ENCODE measurements at regions of chr1 and their contacts with region 1.

Region 1: DNA sequence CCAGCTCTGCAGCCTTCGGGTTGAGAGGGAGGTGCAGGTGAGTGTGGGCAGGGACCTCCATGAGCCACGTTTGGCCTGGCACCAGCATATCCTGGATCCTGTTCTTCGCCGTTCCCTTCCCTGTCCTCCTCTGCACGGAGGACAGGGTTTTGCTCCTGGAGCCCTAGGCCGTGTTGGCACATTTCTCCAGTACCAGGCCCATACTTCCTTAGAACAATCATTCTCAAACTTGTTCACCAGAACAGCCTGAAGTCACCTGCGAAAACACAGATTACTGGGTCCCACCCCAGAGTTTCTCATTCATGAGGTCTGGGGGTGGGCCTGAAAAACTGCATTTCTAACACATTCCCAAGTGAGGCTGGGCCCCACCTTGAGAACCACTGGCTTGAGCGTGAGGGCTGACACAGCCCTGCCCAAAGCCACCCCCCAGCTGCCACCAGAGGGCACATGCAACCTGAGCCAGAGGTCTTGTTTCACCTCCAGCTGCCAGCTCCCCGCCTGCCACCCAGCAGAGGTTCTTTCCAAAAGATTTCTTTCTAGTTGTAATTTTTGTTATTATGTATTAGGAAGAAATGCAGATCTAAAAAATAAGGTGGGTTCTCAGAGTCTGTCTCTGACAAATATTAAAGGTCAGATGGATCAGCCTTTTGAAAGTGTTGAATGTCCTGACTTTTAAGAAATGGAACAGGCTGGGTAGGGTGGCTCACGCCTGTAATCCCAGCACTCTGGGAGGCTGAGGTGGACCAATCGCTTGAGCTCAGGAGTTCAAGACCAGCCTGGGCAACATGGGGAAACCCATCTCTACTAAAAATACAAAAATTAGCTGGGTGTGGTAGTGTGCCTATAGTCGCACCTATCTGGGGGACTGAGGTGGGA is 39.6 kb upstream of the LDLRAP1 start:
- DNase-seq: peak; percentile 55 to 87 (median 76)
- ATAC-seq: peak; percentile 95
- H3K4me3 ChIP-seq: no peak overlapping the region
- H3K4me3 Mint-ChIP-seq: no peak overlapping the region
- H3K27ac ChIP-seq: no peak overlapping the region
- H3K27ac Mint-ChIP-seq: peak overlapping the region; percentile 32
- H3K4me1 ChIP-seq: peaks cover 24% of the 10 kb centered on the region
- H3K4me1 Mint-ChIP-seq: peaks cover 26% of the 10 kb centered on the region
- H3K27me3 ChIP-seq: no peaks in the 10 kb centered on the region
- H3K27me3 Mint-ChIP-seq: no peaks in the 10 kb centered on the region
- CTCF ChIP-seq: peak; percentile 69

Region 2: GRCh38 chr1:24735509-24736375 is 768.0 kb before region 1 on chr1:
- CTCF ChIA-PET with region 1: no interaction called
- POLR2A ChIA-PET with region 1: no interaction called
- intact Hi-C with region 1: no loop called
- DNase-seq: no peak
- ATAC-seq: no peak
- H3K4me3 ChIP-seq: no peak overlapping the region
- H3K4me3 Mint-ChIP-seq: no peak overlapping the region
- H3K27ac ChIP-seq: no peak overlapping the region
- H3K27ac Mint-ChIP-seq: no peak overlapping the region
- H3K4me1 ChIP-seq: no peaks in the 10 kb centered on the region
- H3K4me1 Mint-ChIP-seq: peaks cover 2% of the 10 kb centered on the region
- H3K27me3 ChIP-seq: no peaks in the 10 kb centered on the region
- H3K27me3 Mint-ChIP-seq: peaks cover 4% of the 10 kb centered on the region
- CTCF ChIP-seq: no peak

Region 3: DNA sequence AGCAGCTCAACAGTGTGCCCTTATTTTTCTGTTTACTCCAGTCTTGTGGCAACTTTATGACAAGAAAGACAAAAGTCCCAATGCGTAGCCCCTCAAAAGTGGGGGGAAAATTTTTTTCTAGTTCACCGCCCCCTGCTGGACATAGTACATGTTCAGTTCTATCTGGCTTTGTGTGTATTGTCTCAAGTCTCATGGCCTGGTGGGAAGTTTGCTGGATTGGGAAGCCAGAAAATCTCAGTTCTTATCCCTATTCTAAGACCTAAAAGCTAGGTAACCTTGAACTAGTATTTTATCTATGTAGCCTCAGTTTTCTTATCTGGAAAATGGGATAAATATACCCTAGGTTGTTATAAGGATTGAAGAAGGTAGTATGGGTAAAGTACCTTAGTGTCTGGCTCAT is 16.2 kb before region 1 on chr1:
- CTCF ChIA-PET with region 1: interaction called, 18 read pairs
- POLR2A ChIA-PET with region 1: no interaction called
- intact Hi-C with region 1: no loop called
- DNase-seq: peak in 7 of 9 experiments; percentile 16 to 61 (median 55)
- ATAC-seq: peak; percentile 54
- H3K4me3 ChIP-seq: no peak overlapping the region
- H3K4me3 Mint-ChIP-seq: no peak overlapping the region
- H3K27ac ChIP-seq: no peak overlapping the region
- H3K27ac Mint-ChIP-seq: no peak overlapping the region
- H3K4me1 ChIP-seq: no peaks in the 10 kb centered on the region
- H3K4me1 Mint-ChIP-seq: peaks cover 12% of the 10 kb centered on the region
- H3K27me3 ChIP-seq: no peaks in the 10 kb centered on the region
- H3K27me3 Mint-ChIP-seq: no peaks in the 10 kb centered on the region
- CTCF ChIP-seq: peak; percentile 74

Region 4: GRCh38 chr1:25549273-25550154 is 45.7 kb after region 1 on chr1:
- CTCF ChIA-PET with region 1: interaction called, 13 read pairs
- POLR2A ChIA-PET with region 1: no interaction called
- intact Hi-C with region 1: no loop called
- DNase-seq: peak; percentile 32 to 86 (median 80)
- ATAC-seq: peak; percentile 93
- H3K4me3 ChIP-seq: peak overlapping the region; percentile 19 to 36
- H3K4me3 Mint-ChIP-seq: peak overlapping the region; percentile 77
- H3K27ac ChIP-seq: peak overlapping the region; percentile 57 to 65
- H3K27ac Mint-ChIP-seq: peak overlapping the region; percentile 96
- H3K4me1 ChIP-seq: peaks cover 96% of the 10 kb centered on the region
- H3K4me1 Mint-ChIP-seq: peaks cover 96% of the 10 kb centered on the region
- H3K27me3 ChIP-seq: no peaks in the 10 kb centered on the region
- H3K27me3 Mint-ChIP-seq: no peaks in the 10 kb centered on the region
- CTCF ChIP-seq: no peak

Region 5: GRCh38 chr1:25572708-25573600 is 69.2 kb after region 1 on chr1:
- CTCF ChIA-PET with region 1: interaction called, 62 read pairs
- POLR2A ChIA-PET with region 1: interaction called, 9 read pairs
- intact Hi-C with region 1: no loop called
- DNase-seq: peak in 7 of 9 experiments; percentile 25 to 70 (median 60)
- ATAC-seq: peak; percentile 78
- H3K4me3 ChIP-seq: no peak overlapping the region
- H3K4me3 Mint-ChIP-seq: no peak overlapping the region
- H3K27ac ChIP-seq: no peak overlapping the region
- H3K27ac Mint-ChIP-seq: peak overlapping the region; percentile 66
- H3K4me1 ChIP-seq: peaks cover 57% of the 10 kb centered on the region
- H3K4me1 Mint-ChIP-seq: peaks cover 62% of the 10 kb centered on the region
- H3K27me3 ChIP-seq: no peaks in the 10 kb centered on the region
- H3K27me3 Mint-ChIP-seq: no peaks in the 10 kb centered on the region
- CTCF ChIP-seq: peak; percentile 75

Region 6: DNA sequence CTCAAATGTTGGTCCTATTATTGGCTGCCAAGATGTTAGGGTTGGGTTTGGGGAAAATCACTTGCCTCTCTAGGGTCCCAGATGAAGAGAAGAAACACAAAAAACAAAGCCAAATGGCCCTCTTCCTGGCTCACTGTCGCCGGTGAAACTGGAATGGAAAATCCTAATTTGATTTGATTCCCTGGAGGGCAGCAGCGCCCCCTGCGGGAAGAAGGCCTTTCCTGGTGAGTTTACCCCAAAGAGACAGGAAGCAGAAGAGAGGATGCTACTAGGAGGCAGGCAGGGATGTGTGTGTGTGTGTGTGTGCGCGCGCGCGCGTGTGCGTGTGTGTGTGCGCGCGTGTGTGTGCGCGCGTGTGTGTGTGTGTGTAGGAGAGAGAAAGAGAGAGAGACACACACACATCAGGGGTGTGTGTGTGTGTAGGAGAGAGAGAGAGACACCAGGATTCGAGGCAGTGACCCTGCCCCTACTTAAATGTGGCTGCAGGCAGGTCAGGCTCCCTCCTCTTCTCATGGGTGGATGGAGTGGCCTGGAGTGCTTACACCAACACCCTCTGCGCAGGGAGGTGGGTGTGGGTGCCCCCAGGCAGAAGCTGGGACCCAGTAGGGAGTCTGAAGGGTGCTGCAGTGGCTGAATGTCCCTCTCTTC is 293.1 kb after region 1 on chr1:
- CTCF ChIA-PET with region 1: interaction called, 10 read pairs
- POLR2A ChIA-PET with region 1: interaction called, 3 read pairs
- intact Hi-C with region 1: loop called in 1 of 2 experiments (anchors 5 kb)
- DNase-seq: peak; percentile 64 to 89 (median 86)
- ATAC-seq: peak; percentile 48
- H3K4me3 ChIP-seq: peak overlapping the region in 1 of 2 experiments; percentile 12
- H3K4me3 Mint-ChIP-seq: peak overlapping the region; percentile 75
- H3K27ac ChIP-seq: peak overlapping the region; percentile 33 to 62
- H3K27ac Mint-ChIP-seq: peak overlapping the region; percentile 97
- H3K4me1 ChIP-seq: peaks cover 52% of the 10 kb centered on the region
- H3K4me1 Mint-ChIP-seq: peaks cover 70% of the 10 kb centered on the region
- H3K27me3 ChIP-seq: no peaks in the 10 kb centered on the region
- H3K27me3 Mint-ChIP-seq: no peaks in the 10 kb centered on the region
- CTCF ChIP-seq: peak; percentile 62

Region 7: GRCh38 chr1:25810341-25811299 is 306.8 kb after region 1 on chr1:
- CTCF ChIA-PET with region 1: interaction called, 56 read pairs
- POLR2A ChIA-PET with region 1: no interaction called
- intact Hi-C with region 1: loop called (anchors 1 to 2 kb)
- DNase-seq: peak; percentile 67 to 91 (median 82)
- ATAC-seq: peak; percentile 98
- H3K4me3 ChIP-seq: no peak overlapping the region
- H3K4me3 Mint-ChIP-seq: no peak overlapping the region
- H3K27ac ChIP-seq: no peak overlapping the region
- H3K27ac Mint-ChIP-seq: no peak overlapping the region
- H3K4me1 ChIP-seq: peaks cover 5% of the 10 kb centered on the region
- H3K4me1 Mint-ChIP-seq: peaks cover 5% of the 10 kb centered on the region
- H3K27me3 ChIP-seq: no peaks in the 10 kb centered on the region
- H3K27me3 Mint-ChIP-seq: no peaks in the 10 kb centered on the region
- CTCF ChIP-seq: peak; percentile 98